ENCODE measurements at regions of chr4 and their contacts with region 1.

Region 1: GRCh38 chr4:80365928-80366327 is 30.4 kb downstream of the CFAP299 start:
- DNase-seq: no peak
- ATAC-seq: peak; percentile 48

Region 2: GRCh38 chr4:80989921-80990544 is 624.1 kb after region 1 on chr4:
- intact Hi-C with region 1: loop called (anchors 10 kb)
- DNase-seq: no peak
- ATAC-seq: no peak

Region 3: GRCh38 chr4:81052119-81053068 is 686.5 kb after region 1 on chr4:
- intact Hi-C with region 1: loop called (anchors 10 kb)
- DNase-seq: peak; percentile 50
- ATAC-seq: peak; percentile 55

Measured in left ventricle myocardium superior (tissue), 1 donor.